ENCODE measurements at regions of chr17 and their contacts with region 1.

Region 1: GRCh38 chr17:35088881-35089585 is 25.5 kb upstream of the RFFL start:
- DNase-seq: peak; percentile 86 to 96 (median 96)
- ATAC-seq: peak; percentile 96 to 97
- H3K4me3 ChIP-seq: peak overlapping the region; percentile 62
- H3K27ac ChIP-seq: peak overlapping the region; percentile 66
- H3K4me1 ChIP-seq: peaks cover 2% of the 10 kb centered on the region
- H3K27me3 ChIP-seq: no peaks in the 10 kb centered on the region

Region 2: GRCh38 chr17:34961093-34961911 is 127.7 kb before region 1 on chr17 and contains the starts of genes CCT6B and ZNF830:
- intact Hi-C with region 1: loop called in 1 of 4 experiments (anchors 5 kb)
- DNase-seq: peak; percentile 92 to 96 (median 94)
- ATAC-seq: peak; percentile 97 to 99
- H3K4me3 ChIP-seq: peak within 1 kb of the TSS; percentile 93
- H3K27ac ChIP-seq: peak within 1 kb of the TSS; percentile 95
- H3K4me1 ChIP-seq: no peaks in the 10 kb centered on the region
- H3K27me3 ChIP-seq: no peaks in the 10 kb centered on the region
- total RNA-seq, gene CCT6B: 0.97 to 2.8 (median 2.2) TPM
- total RNA-seq, gene ZNF830: 8.3 to 11.2 (median 10.6) TPM

Region 3: GRCh38 chr17:34980681-34981537 is 108.1 kb before region 1 on chr17:
- intact Hi-C with region 1: loop called in 1 of 4 experiments (anchors 5 kb)
- DNase-seq: peak; percentile 86 to 92 (median 91)
- ATAC-seq: peak; percentile 96
- H3K4me3 ChIP-seq: peak overlapping the region; percentile 92
- H3K27ac ChIP-seq: peak overlapping the region; percentile 98
- H3K4me1 ChIP-seq: no peaks in the 10 kb centered on the region
- H3K27me3 ChIP-seq: no peaks in the 10 kb centered on the region

Region 4: DNA sequence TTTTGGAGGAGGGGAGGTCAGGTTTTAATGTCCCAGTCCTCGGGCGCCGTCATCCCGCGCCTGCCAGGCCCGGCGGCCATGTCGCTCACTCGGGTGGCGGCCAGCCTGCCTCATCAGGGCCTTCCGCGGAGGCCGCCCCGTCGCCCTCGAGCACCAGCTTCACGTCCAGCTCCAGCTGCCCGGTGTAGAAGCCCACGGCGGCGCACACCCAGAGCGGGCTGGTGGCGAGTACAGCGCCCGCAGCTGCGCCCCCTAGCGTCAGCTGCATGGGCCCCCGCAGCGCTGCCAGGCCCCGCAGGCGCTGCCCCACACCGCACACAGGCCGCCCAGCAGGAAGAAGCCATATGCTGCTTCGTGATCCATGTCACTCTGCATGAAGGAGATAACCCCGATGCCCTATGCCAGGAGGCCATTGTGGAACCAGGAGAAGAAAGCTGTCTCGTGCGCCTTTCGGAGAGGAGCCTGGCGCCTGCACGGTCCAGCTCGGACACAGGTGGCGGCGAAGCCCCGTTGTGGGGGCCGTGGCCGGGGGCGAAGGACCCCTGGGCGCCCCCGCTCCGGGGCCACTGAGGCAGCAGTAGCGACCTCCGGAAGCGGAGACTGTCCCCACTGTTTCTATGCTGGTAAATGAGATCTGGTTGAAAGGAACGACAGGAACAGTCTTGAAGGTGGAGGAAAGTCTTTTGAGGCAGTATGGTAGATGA is 507.6 kb after region 1 on chr17:
- intact Hi-C with region 1: no loop called
- DNase-seq: peak in 1 of 3 donors; percentile 58
- ATAC-seq: peak; percentile 49 to 56
- H3K4me3 ChIP-seq: no peak overlapping the region
- H3K27ac ChIP-seq: no peak overlapping the region
- H3K4me1 ChIP-seq: no peaks in the 10 kb centered on the region
- H3K27me3 ChIP-seq: no peaks in the 10 kb centered on the region